ENCODE measurements at regions of chr18 and their contacts with region 1.

Region 1: GRCh38 chr18:9683407-9684396 is 24.4 kb upstream of the RAB31 start:
- DNase-seq: peak; percentile 50
- ATAC-seq: peak; percentile 89
- H3K4me3 ChIP-seq: no peak overlapping the region
- H3K27ac ChIP-seq: no peak overlapping the region
- H3K4me1 ChIP-seq: peaks cover 12 to 17% of the 10 kb centered on the region in 2 experiments
- H3K27me3 ChIP-seq: no peaks in the 10 kb centered on the region
- CTCF ChIP-seq: peak; percentile 49 to 67 (median 61); a peak in 5 of 6 replicates
- POLR2A ChIP-seq: no peak
- RAD21 ChIP-seq: peak; percentile 86

Region 2: DNA sequence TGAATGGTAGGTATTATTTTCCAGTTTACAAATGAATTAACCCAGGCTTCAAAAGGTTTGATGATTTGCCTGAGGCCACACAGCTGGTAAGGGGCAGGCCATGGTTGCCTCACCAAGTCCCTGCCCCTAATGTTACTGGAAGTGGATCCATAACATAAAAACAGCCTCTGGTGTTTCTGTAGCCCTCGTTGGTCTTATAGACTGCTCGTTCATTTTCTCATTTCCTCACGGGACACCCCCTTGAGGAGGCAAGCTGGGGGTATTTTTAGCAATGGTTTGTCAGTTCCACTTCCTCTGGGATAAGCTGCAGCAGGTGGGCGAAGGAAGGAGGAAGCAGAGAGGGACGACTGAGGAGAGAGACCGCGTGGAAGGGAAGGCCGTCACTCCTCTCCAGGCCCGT is 614.1 kb before region 1 on chr18:
- CTCF ChIA-PET with region 1: no interaction called
- POLR2A ChIA-PET with region 1: no interaction called
- RAD21 ChIA-PET with region 1: no interaction called
- intact Hi-C with region 1: loop called (anchors 5 kb)
- DNase-seq: no peak
- ATAC-seq: no peak
- H3K4me3 ChIP-seq: no peak overlapping the region
- H3K27ac ChIP-seq: no peak overlapping the region
- H3K4me1 ChIP-seq: peaks cover 2 to 23% of the 10 kb centered on the region in 2 experiments; a peak in 3 of 4 replicates
- H3K27me3 ChIP-seq: no peaks in the 10 kb centered on the region
- CTCF ChIP-seq: no peak
- POLR2A ChIP-seq: no peak
- RAD21 ChIP-seq: no peak

Region 3: GRCh38 chr18:9433671-9434121 is 250.0 kb before region 1 on chr18:
- CTCF ChIA-PET with region 1: no interaction called
- POLR2A ChIA-PET with region 1: no interaction called
- RAD21 ChIA-PET with region 1: no interaction called
- intact Hi-C with region 1: no loop called
- DNase-seq: no peak
- ATAC-seq: no peak
- H3K4me3 ChIP-seq: no peak overlapping the region
- H3K27ac ChIP-seq: no peak overlapping the region
- H3K4me1 ChIP-seq: no peaks in the 10 kb centered on the region
- H3K27me3 ChIP-seq: no peaks in the 10 kb centered on the region
- CTCF ChIP-seq: no peak
- POLR2A ChIP-seq: no peak
- RAD21 ChIP-seq: no peak

Region 4: GRCh38 chr18:9575558-9575957 is 108.1 kb before region 1 on chr18:
- CTCF ChIA-PET with region 1: interaction called, 10 read pairs
- POLR2A ChIA-PET with region 1: interaction called, 3 read pairs
- RAD21 ChIA-PET with region 1: no interaction called
- intact Hi-C with region 1: loop called (anchors 1 kb)
- DNase-seq: peak; percentile 89
- ATAC-seq: peak; percentile 96
- H3K4me3 ChIP-seq: no peak overlapping the region
- H3K27ac ChIP-seq: no peak overlapping the region
- H3K4me1 ChIP-seq: peaks cover 4 to 17% of the 10 kb centered on the region in 2 experiments; a peak in 3 of 4 replicates
- H3K27me3 ChIP-seq: no peaks in the 10 kb centered on the region
- CTCF ChIP-seq: peak; percentile 66 to 88 (median 87)
- POLR2A ChIP-seq: no peak
- RAD21 ChIP-seq: peak; percentile 88

Region 5: GRCh38 chr18:9614401-9615279 is 69.1 kb before region 1 on chr18 and contains the start of gene PPP4R1:
- CTCF ChIA-PET with region 1: interaction called, 5 read pairs
- POLR2A ChIA-PET with region 1: no interaction called
- RAD21 ChIA-PET with region 1: no interaction called
- intact Hi-C with region 1: loop called (anchors 1 kb)
- DNase-seq: no peak
- ATAC-seq: peak; percentile 76
- H3K4me3 ChIP-seq: peak within 1 kb of the TSS; percentile 78 to 87
- H3K27ac ChIP-seq: peak within 1 kb of the TSS; percentile 85
- H3K4me1 ChIP-seq: peaks cover 18 to 41% of the 10 kb centered on the region in 2 experiments
- H3K27me3 ChIP-seq: no peaks in the 10 kb centered on the region
- CTCF ChIP-seq: no peak
- POLR2A ChIP-seq: peak; percentile 43
- RAD21 ChIP-seq: no peak
- total RNA-seq, gene PPP4R1: 66.7 TPM

Region 6: GRCh38 chr18:9771261-9771976 is 87.7 kb after region 1 on chr18:
- CTCF ChIA-PET with region 1: no interaction called
- POLR2A ChIA-PET with region 1: no interaction called
- RAD21 ChIA-PET with region 1: no interaction called
- intact Hi-C with region 1: loop called (anchors 2 kb)
- DNase-seq: peak; percentile 56
- ATAC-seq: peak; percentile 99
- H3K4me3 ChIP-seq: 0 out of 4 replicates have a peak overlapping the region, but pooled peaks of 1 of the 2 experiments have one; percentile 4
- H3K27ac ChIP-seq: no peak overlapping the region
- H3K4me1 ChIP-seq: peaks cover 0 to 20% of the 10 kb centered on the region in 2 experiments; a peak in 3 of 4 replicates
- H3K27me3 ChIP-seq: no peaks in the 10 kb centered on the region
- CTCF ChIP-seq: peak; percentile 69 to 99 (median 96)
- POLR2A ChIP-seq: no peak
- RAD21 ChIP-seq: peak; percentile 90